CD14-positive monocyte (primary cell): ENCODE measurements at regions of chr7 and their contacts with region 1.

Region 1: GRCh38 chr7:100691676-100692577 is 2.1 kb downstream of the GIGYF1 start:
- DNase-seq: peak; percentile 64 to 75 (median 66)
- H3K4me3 ChIP-seq: peak overlapping the region in 1 of 3 experiments; percentile 79
- H3K4me3 Mint-ChIP-seq: peak overlapping the region; percentile 94 to 98
- H3K27ac ChIP-seq: no peak overlapping the region
- H3K27ac Mint-ChIP-seq: peak overlapping the region in 1 of 7 donors; percentile 58
- H3K4me1 ChIP-seq: peaks cover 28 to 35% of the 10 kb centered on the region in 2 donors
- H3K4me1 Mint-ChIP-seq: peaks cover 23% of the 10 kb centered on the region
- H3K27me3 ChIP-seq: peaks cover 0 to 18% of the 10 kb centered on the region in 2 donors
- H3K27me3 Mint-ChIP-seq: peaks cover 12 to 18% (median 15%) of the 10 kb centered on the region in 3 donors
- CTCF ChIP-seq: peak; percentile 82

Region 2: GRCh38 chr7:100604028-100604975 is 87.6 kb before region 1 on chr7:
- intact Hi-C with region 1: loop called in 1 of 2 experiments (anchors 2 kb)
- DNase-seq: peak; percentile 64 to 70 (median 70)
- H3K4me3 ChIP-seq: peak overlapping the region; percentile 64 to 90 (median 89)
- H3K4me3 Mint-ChIP-seq: peak overlapping the region; percentile 77 to 87
- H3K27ac ChIP-seq: peak overlapping the region; percentile 12 to 68
- H3K27ac Mint-ChIP-seq: peak overlapping the region in 3 of 7 donors; percentile 61 to 80 (median 64)
- H3K4me1 ChIP-seq: peaks cover 24 to 26% of the 10 kb centered on the region in 2 donors
- H3K4me1 Mint-ChIP-seq: peaks cover 21% of the 10 kb centered on the region
- H3K27me3 ChIP-seq: peaks cover 0 to 24% of the 10 kb centered on the region in 2 donors
- H3K27me3 Mint-ChIP-seq: peaks cover 17 to 45% (median 38%) of the 10 kb centered on the region in 3 donors
- CTCF ChIP-seq: peak; percentile 64

Region 3: GRCh38 chr7:100614308-100614861 is 77.5 kb before region 1 on chr7:
- intact Hi-C with region 1: no loop called
- DNase-seq: peak in 1 of 3 donors; percentile 28
- H3K4me3 ChIP-seq: no peak overlapping the region
- H3K4me3 Mint-ChIP-seq: peak overlapping the region in 1 of 2 donors; percentile 97
- H3K27ac ChIP-seq: no peak overlapping the region
- H3K27ac Mint-ChIP-seq: peak overlapping the region in 1 of 7 donors; percentile 45
- H3K4me1 ChIP-seq: peaks cover 22 to 27% of the 10 kb centered on the region in 2 donors
- H3K4me1 Mint-ChIP-seq: peaks cover 19% of the 10 kb centered on the region
- H3K27me3 ChIP-seq: no peaks in the 10 kb centered on the region
- H3K27me3 Mint-ChIP-seq: peaks cover 0 to 6% (median 1%) of the 10 kb centered on the region in 3 donors
- CTCF ChIP-seq: no peak

Region 4: DNA sequence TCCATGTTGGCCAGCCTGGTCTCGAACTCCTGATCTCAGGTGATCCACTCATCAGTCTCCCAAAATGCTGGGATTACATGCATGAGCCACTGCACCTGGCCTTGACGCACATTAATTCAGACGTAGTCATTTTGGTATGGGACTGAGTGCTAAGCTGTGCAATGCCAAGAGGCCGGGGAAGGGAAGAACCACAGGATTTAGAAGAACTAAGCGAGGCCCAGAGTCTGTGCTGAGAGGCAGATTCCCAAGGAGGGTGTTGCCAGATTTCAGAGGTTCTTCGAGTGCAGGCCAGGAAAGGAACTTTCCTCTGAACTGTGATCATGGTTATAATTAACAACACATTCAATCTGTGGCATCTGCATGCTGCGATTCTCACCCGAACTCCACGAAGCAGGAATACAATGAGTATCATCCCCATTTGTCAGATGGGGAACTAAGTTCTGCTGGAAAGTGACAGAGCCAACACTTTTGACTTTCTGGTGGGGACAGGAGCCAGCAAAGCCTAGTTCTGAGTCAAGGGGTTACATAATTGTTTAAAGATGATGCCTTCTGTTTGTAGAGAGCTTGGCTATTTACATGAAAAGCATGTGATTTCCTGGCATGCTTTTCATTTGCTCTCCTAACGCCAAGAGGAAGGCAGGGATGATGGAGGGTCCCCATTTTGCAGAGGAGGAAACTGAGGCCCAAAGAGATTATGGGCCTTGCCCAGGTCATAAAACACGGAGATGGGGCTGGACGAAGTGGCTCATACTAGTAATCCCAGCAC is 35.3 kb after region 1 on chr7:
- intact Hi-C with region 1: no loop called
- DNase-seq: no peak
- H3K4me3 ChIP-seq: no peak overlapping the region
- H3K4me3 Mint-ChIP-seq: no peak overlapping the region
- H3K27ac ChIP-seq: no peak overlapping the region
- H3K27ac Mint-ChIP-seq: no peak overlapping the region
- H3K4me1 ChIP-seq: no peaks in the 10 kb centered on the region
- H3K4me1 Mint-ChIP-seq: peaks cover 8% of the 10 kb centered on the region
- H3K27me3 ChIP-seq: peaks cover 0 to under 1% of the 10 kb centered on the region in 2 donors
- H3K27me3 Mint-ChIP-seq: peaks cover 20 to 33% (median 26%) of the 10 kb centered on the region in 3 donors
- CTCF ChIP-seq: no peak